ENCODE measurements at regions of chr10 and their contacts with region 1.

Region 1: GRCh38 chr10:50624866-50625692 is 1.3 kb upstream of the SGMS1 start:
- DNase-seq: no peak
- ATAC-seq: peak; percentile 45
- H3K4me3 Mint-ChIP-seq: peak overlapping the region; percentile 89
- H3K27ac Mint-ChIP-seq: peak overlapping the region; percentile 93
- H3K4me1 Mint-ChIP-seq: peaks cover 19% of the 10 kb centered on the region
- H3K27me3 Mint-ChIP-seq: no peaks in the 10 kb centered on the region

Region 2: DNA sequence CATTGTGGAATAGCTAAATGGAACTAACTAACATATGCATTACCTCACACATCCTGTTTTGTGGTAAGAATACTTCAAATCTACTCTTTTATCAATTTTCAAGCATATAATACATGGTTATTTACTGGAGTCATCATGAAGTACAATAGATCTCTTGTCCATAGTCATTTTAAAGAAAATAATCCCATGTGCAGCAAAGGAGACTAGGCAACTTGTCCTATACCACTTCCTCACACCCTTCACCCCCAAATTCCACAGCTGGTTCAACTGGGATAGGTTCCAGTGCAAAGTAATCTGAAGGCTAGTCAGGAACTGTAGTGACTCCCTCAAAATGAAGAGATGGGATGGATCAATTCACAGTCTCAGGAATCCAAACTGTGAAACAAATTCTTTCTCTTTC is 177.4 kb before region 1 on chr10:
- POLR2A ChIA-PET with region 1: no interaction called
- DNase-seq: no peak
- ATAC-seq: no peak
- H3K4me3 Mint-ChIP-seq: no peak overlapping the region
- H3K27ac Mint-ChIP-seq: no peak overlapping the region
- H3K4me1 Mint-ChIP-seq: peaks cover 5% of the 10 kb centered on the region
- H3K27me3 Mint-ChIP-seq: no peaks in the 10 kb centered on the region

Region 3: DNA sequence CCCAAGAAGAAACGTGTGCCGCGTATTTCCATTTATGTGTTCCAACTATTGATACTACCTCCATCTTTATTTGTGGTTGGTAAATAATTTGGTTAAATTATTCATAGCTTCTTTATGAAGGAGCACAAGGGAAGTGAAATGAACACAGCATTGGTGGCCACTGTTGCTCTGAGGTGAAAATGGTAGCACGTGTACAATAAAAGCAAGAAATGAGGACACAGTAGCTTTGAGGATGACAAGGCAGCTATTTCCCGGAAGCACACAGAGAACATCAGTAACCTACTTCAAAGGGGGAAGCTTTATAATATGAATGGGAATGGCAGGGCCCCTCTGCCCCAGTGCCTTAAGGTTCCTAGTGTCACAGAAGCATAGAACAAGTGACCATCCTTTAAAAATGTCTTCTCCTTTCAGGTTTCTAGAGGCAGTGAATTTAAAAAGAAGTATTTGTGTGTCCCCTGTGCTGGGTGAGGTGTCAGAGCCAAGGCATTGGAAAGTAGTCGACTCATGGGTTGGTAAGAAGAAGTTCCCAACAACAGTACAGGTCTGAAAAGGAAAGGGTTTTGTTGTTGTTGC is 80.1 kb before region 1 on chr10:
- POLR2A ChIA-PET with region 1: interaction called, 10 read pairs
- DNase-seq: no peak
- ATAC-seq: peak; percentile 55
- H3K4me3 Mint-ChIP-seq: no peak overlapping the region
- H3K27ac Mint-ChIP-seq: peak overlapping the region; percentile 64
- H3K4me1 Mint-ChIP-seq: peaks cover 49% of the 10 kb centered on the region
- H3K27me3 Mint-ChIP-seq: no peaks in the 10 kb centered on the region

Region 4: DNA sequence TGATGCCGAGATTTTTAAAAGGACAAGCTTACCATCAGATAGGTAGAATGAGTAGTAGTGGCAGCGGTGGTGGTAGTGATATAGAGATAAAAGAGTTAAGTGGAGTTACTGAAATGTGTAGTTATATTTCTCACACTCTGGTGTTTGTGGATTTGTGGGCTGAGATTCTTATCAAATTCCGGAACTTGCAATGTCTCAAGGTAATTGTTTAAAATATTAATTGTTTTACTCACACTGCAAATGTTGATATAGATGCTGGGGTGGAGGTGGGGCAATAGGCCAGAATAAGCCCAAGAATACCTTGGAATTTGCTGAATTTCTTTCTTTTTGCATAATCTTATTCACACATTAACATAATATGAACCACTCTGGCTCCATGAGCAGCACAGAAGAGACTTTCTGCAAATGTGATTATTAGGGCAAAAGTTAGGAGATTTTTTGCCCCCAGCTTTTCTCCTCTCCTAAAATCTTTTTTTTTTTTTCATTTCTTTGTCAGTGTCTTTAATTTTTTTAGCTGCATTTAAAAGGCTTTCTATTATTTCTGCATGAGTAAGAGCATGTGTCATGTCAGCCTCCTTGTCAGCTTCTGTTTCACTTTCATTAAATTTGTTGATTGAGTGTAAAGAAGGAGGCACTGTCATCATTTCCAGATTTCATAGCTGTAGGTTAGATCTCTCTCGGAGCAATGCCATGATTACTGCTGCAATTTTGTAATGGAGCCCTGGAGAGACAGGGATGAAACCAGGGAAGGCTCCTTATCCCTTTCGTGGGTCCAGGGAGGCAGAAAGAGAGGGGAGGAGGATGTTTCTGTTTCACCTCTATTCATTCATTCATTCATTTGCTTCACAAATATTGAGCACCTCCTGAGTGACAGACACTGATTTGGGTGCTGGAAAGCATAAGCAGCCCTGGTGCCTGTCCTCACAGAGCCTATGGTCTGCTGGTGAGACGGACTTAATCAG is 11.8 kb after region 1 on chr10:
- POLR2A ChIA-PET with region 1: interaction called, 26 read pairs
- DNase-seq: no peak
- ATAC-seq: peak; percentile 89
- H3K4me3 Mint-ChIP-seq: peak overlapping the region; percentile 66
- H3K27ac Mint-ChIP-seq: peak overlapping the region; percentile 66
- H3K4me1 Mint-ChIP-seq: peaks cover 29% of the 10 kb centered on the region
- H3K27me3 Mint-ChIP-seq: peaks cover 10% of the 10 kb centered on the region

Region 5: DNA sequence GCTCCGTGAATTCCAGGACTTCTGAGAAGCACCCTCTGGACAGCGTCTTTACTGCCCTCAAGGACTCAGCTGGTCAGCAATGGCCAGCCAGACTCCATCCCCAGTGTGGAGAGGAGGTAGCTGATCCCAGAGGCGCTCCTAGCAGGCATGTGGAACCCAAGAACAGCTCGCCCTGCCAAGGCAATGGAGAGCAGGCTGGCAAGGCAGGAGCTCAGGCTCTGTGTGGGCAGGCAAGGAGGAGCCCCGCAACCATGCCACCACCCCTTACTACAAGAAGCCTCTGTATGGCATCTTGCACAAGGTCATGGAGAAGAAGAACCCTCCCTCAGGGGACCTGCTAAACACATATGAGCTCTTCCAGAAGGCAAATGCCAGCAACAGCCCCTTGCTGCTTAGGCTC is 33.1 kb after region 1 on chr10:
- POLR2A ChIA-PET with region 1: interaction called, 14 read pairs
- DNase-seq: no peak
- ATAC-seq: no peak
- H3K4me3 Mint-ChIP-seq: peak overlapping the region; percentile 88
- H3K27ac Mint-ChIP-seq: no peak overlapping the region
- H3K4me1 Mint-ChIP-seq: peaks cover 18% of the 10 kb centered on the region
- H3K27me3 Mint-ChIP-seq: no peaks in the 10 kb centered on the region

Measured in activated naive CD8-positive, alpha-beta T cell treated with anti-CD3 and anti-CD28 coated beads, Interleukin-2, amount 10 ng/mL, durations not matched to agents 7 days and 5 days (primary cell).